ENCODE measurements at regions of chr7 and their contacts with region 1.

Region 1: DNA sequence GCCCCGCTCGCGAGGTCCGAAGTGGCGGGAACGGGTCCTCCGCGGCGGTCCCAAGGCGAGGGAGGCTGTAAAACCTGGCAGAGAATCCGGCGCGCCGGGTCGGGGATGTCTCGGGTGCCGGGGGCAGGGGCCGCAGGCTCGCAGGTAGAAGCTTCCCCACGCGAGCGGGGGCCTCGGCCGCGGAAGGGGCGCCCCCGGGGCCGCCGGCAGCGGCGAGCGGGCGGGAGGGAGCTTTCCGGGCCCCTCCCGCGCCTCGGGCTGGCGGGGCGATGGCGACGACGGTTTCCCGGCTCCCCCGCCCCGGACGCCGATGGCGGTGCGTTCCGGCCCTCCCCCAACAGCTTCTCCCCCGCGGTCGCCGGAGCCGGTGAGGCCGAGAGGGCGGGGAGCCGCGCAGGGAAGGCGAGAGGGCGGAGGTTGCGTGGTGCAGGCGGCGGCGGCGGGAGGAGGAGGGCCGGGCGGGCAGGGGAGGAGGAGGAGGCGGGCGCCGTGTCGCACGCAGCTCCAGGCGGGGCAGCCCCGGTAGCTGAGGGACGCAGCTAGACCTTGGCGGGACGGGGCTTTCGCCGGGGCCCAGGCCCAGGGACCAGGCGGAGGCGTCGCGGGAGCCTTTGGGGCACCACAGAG is at the start of gene CUL1:
- DNase-seq: peak; percentile 64 to 92
- H3K4me3 ChIP-seq: peak within 1 kb of the TSS; percentile 76
- H3K27ac ChIP-seq: peak within 1 kb of the TSS; percentile 79
- H3K4me1 ChIP-seq: peaks cover 39% of the 10 kb centered on the region
- H3K27me3 ChIP-seq: no peaks in the 10 kb centered on the region
- CTCF ChIP-seq: no peak
- total RNA-seq, gene CUL1: 54.7 and 78.3 TPM in 2 replicates

Region 2: DNA sequence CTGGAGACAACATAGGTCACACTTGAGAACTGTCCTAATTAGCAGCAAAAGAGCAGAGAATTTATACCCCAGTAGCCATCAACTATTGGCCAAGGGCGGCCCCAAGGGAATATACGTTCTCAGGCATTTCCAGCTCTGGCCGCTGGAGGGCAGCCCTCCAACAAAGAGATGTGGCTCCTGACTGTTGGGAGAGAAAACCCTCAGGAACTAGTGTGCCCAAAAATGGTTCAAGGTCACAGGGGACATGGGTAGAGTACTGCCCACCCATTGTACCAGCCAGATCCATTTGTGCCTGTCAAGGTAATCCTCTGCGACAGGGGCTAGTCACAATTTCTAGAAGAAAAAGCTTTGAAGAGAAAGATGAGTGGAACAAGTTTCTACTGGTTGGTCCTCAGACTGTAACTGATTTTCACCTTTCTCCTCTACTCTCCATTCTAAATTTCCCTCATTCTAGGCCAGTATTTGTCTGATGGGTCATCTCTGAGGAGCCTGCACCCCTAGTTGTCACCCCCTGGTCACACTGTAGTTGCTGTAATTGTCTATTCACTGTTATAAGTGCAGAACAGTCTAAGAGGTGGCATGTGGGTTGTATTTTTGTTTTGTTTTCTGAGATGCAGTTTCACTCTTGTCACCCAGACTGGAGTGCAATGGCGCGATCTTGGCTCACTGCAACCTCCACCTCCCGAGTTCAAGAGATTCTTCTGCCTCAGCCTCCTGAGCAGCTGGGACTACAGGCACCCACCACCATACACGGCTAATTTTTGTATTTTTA is 122.7 kb before region 1 on chr7:
- CTCF ChIA-PET with region 1: no interaction called
- POLR2A ChIA-PET with region 1: no interaction called
- intact Hi-C with region 1: loop called (anchors 5 kb)
- DNase-seq: peak in 1 of 2 experiments; percentile 72
- H3K4me3 ChIP-seq: no peak overlapping the region
- H3K27ac ChIP-seq: no peak overlapping the region
- H3K4me1 ChIP-seq: no peaks in the 10 kb centered on the region
- H3K27me3 ChIP-seq: no peaks in the 10 kb centered on the region
- CTCF ChIP-seq: peak; percentile 92

Region 3: GRCh38 chr7:148712678-148713329 is 14.3 kb after region 1 on chr7:
- CTCF ChIA-PET with region 1: no interaction called
- POLR2A ChIA-PET with region 1: interaction called, 10 read pairs
- intact Hi-C with region 1: loop called (anchors 1 kb)
- DNase-seq: no peak
- H3K4me3 ChIP-seq: no peak overlapping the region
- H3K27ac ChIP-seq: 0 out of 2 replicates have a peak overlapping the region, but pooled peaks have one; percentile 0
- H3K4me1 ChIP-seq: peaks cover 33% of the 10 kb centered on the region
- H3K27me3 ChIP-seq: no peaks in the 10 kb centered on the region
- CTCF ChIP-seq: no peak

Region 4: GRCh38 chr7:148809856-148810255 is 111.3 kb after region 1 on chr7:
- CTCF ChIA-PET with region 1: no interaction called
- POLR2A ChIA-PET with region 1: no interaction called
- intact Hi-C with region 1: no loop called
- DNase-seq: no peak
- H3K4me3 ChIP-seq: no peak overlapping the region
- H3K27ac ChIP-seq: no peak overlapping the region
- H3K4me1 ChIP-seq: no peaks in the 10 kb centered on the region
- H3K27me3 ChIP-seq: no peaks in the 10 kb centered on the region
- CTCF ChIP-seq: no peak